ENCODE measurements at regions of chr9 and their contacts with region 1.

Region 1: DNA sequence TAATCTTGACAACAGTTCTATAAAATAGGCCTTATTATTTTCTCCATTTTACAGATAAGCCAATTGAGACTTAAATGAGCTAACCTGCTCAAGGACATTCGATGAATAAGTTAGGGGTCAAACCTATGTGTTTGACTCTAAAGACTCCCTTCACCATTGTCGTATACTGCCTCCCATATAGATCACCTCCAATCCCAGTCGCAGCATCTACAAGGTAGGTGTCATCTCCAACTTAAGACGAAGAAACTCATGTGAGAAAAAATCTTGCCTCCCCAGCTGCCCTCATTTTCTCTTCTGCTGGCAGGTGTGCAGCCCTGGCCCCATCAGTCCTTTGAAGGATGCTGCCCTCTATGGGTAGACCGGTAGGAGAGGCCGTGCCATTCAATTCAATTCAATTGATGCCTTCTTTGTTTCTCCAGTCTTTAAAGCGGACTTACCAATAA is 75.2 kb upstream of the SMARCA2 start:
- DNase-seq: no peak
- H3K4me3 ChIP-seq: no peak overlapping the region
- H3K27ac ChIP-seq: no peak overlapping the region
- H3K4me1 ChIP-seq: no peaks in the 10 kb centered on the region
- H3K27me3 ChIP-seq: no peaks in the 10 kb centered on the region
- CTCF ChIP-seq: peak; percentile 69 to 88 (median 76)
- EP300 ChIP-seq: no peak
- POLR2A ChIP-seq: no peak
- RAD21 ChIP-seq: peak; percentile 69 to 76

Region 2: GRCh38 chr9:1747417-1747967 is 192.5 kb before region 1 on chr9:
- CTCF ChIA-PET with region 1: no interaction called
- POLR2A ChIA-PET with region 1: no interaction called
- DNase-seq: no peak
- H3K4me3 ChIP-seq: no peak overlapping the region
- H3K27ac ChIP-seq: no peak overlapping the region
- H3K4me1 ChIP-seq: no peaks in the 10 kb centered on the region
- H3K27me3 ChIP-seq: no peaks in the 10 kb centered on the region
- CTCF ChIP-seq: no peak
- EP300 ChIP-seq: no peak
- POLR2A ChIP-seq: no peak
- RAD21 ChIP-seq: no peak

Region 3: GRCh38 chr9:1916655-1917054 is 23.3 kb before region 1 on chr9:
- CTCF ChIA-PET with region 1: interaction called, 21 read pairs
- POLR2A ChIA-PET with region 1: no interaction called
- DNase-seq: no peak
- H3K4me3 ChIP-seq: no peak overlapping the region
- H3K27ac ChIP-seq: no peak overlapping the region
- H3K4me1 ChIP-seq: peaks cover 2 to 7% (median 3%) of the 10 kb centered on the region in 4 experiments; a peak in 4 of 7 replicates
- H3K27me3 ChIP-seq: no peaks in the 10 kb centered on the region
- CTCF ChIP-seq: no peak
- EP300 ChIP-seq: no peak
- POLR2A ChIP-seq: no peak
- RAD21 ChIP-seq: no peak

Region 4: DNA sequence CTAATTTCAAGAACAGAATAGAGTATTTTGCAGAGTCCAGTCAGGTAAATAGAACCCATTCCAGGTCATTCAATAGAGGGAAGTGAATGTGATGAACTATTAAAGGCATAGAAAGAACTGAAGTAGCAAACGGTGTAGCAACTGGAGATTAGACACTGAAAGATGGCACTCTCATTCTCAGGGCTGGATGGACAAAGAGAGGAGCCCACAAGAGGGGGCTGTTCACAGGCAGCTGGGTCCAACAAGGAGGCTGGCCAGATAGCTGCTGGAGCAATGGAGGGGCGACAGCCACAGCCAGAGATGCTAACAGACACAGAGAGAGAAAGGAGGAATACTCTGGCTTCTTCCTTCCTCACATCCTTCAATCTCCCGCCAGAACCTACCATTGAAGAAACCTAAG is 17.9 kb before region 1 on chr9:
- CTCF ChIA-PET with region 1: interaction called, 21 read pairs
- POLR2A ChIA-PET with region 1: no interaction called
- DNase-seq: no peak
- H3K4me3 ChIP-seq: no peak overlapping the region
- H3K27ac ChIP-seq: no peak overlapping the region
- H3K4me1 ChIP-seq: peaks cover 2 to 7% (median 3%) of the 10 kb centered on the region in 4 experiments; a peak in 4 of 7 replicates
- H3K27me3 ChIP-seq: no peaks in the 10 kb centered on the region
- CTCF ChIP-seq: peak; percentile 24 to 55 (median 48)
- EP300 ChIP-seq: no peak
- POLR2A ChIP-seq: no peak
- RAD21 ChIP-seq: peak; percentile 55 to 67

Region 5: DNA sequence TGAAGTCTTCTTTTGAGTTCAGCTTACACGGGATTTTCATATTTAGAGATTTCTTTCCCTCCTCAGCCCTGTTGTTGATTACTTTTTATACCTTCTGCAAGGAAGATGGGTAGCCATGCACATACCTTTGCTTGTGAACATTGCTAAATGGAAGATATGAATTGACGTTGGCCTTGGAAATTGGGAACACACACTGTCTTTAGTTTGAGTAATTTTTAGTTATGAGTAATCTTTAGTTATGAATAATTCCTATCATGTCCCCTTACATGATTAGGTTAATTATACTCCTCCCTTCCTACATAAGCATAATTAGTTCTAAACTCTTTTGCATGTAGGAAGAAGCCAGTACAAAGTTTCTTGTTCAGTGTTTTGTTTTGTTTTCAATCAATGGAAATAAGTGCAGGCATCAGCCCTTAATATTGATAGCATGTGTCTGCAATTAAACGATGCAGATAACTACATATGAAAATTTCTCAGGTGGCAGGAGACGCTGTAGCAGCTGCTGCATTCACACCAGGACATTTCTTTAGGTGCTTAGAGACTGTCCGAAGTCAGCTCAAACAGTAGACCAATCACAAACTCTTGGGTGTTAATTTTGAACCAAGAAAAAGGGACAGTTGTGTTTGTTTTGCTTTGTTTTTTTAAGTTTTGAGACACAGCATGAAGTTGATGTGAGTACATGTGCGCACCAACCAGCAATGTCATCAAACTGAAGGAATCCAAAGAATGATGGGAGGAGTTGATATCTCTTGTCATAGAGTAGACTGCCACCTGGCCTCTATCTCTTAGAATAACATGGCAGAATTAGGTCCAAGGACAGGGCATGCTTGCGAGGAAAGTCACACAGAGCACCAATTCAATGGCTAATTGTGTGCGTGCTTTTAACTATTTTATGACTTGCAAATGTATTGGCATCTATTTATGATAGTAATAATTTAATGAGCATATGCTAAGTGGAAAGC is 126.6 kb after region 1 on chr9:
- CTCF ChIA-PET with region 1: interaction called, 26 read pairs
- POLR2A ChIA-PET with region 1: no interaction called
- DNase-seq: no peak
- H3K4me3 ChIP-seq: no peak overlapping the region
- H3K27ac ChIP-seq: no peak overlapping the region
- H3K4me1 ChIP-seq: no peaks in the 10 kb centered on the region
- H3K27me3 ChIP-seq: no peaks in the 10 kb centered on the region
- CTCF ChIP-seq: peak in 2 of 3 experiments; percentile 48 to 54; a peak in 3 of 4 replicates
- EP300 ChIP-seq: no peak
- POLR2A ChIP-seq: no peak
- RAD21 ChIP-seq: peak; percentile 77 to 83

Region 6: DNA sequence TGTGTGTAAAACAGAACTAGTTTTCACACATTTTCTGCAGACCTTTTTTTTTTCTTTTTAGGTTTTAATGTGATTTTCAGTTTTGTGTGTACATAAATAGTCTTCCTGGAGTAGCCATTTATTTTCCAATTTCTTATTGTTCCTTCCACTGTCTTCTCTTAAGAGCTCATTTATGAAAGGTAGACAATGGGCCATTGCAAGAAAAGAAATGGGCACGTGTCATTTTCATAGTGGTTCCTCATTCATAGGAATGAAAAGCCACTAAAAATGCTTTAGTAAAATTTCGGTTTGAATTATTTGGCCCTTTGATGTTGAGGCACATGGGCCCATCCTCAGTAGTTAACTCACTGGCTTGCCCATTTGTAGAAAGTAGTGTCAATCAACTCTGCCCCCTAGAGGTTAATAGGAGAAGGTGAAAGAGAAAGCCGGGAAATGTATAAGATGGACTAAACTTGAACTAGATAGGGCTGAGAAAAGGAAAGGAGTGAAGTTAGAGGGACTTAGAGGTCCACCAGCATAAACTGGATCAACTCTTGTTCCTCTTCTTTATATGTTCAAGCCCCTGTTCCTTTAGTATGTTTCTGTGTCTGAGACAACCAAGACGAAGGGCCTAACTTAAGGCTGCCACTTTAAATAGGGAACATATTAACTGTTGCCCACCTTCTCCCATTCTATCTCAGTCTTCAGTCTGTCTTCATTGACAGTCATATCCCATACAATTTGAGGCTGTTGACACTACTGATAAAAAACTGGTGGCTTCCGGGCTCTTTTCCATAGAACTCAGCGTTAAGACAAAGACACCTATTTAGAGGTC is 147.8 kb after region 1 on chr9:
- CTCF ChIA-PET with region 1: interaction called, 22 read pairs
- POLR2A ChIA-PET with region 1: no interaction called
- DNase-seq: no peak
- H3K4me3 ChIP-seq: no peak overlapping the region
- H3K27ac ChIP-seq: no peak overlapping the region
- H3K4me1 ChIP-seq: no peaks in the 10 kb centered on the region
- H3K27me3 ChIP-seq: no peaks in the 10 kb centered on the region
- CTCF ChIP-seq: peak in 2 of 3 experiments; percentile 57 to 71; a peak in 3 of 4 replicates
- EP300 ChIP-seq: no peak
- POLR2A ChIP-seq: no peak
- RAD21 ChIP-seq: peak; percentile 71 to 80

Region 7: DNA sequence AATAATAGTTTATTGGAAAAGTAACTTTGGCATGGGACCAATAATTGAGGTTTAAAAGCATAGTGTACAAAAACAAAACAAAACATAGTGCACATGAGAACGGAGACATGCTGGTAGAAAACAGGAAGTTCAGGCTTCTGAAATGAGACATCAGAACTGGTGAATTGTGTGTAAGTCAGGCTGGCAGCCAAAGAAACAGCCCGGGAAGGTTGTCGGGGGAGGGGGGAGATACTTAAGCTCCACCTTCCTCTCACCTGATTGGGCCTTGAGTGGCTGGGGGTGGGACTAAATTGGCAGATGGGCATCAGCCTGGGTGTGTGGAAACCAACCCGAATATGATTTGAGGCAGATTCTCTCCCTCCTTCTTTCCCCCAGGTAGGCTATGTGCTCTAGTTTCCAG is 331.5 kb after region 1 on chr9:
- CTCF ChIA-PET with region 1: no interaction called
- POLR2A ChIA-PET with region 1: no interaction called
- DNase-seq: peak in 1 of 2 experiments; percentile 53
- H3K4me3 ChIP-seq: no peak overlapping the region
- H3K27ac ChIP-seq: no peak overlapping the region
- H3K4me1 ChIP-seq: peaks cover 0 to 6% (median 3%) of the 10 kb centered on the region in 4 experiments; a peak in 3 of 7 replicates
- H3K27me3 ChIP-seq: no peaks in the 10 kb centered on the region
- CTCF ChIP-seq: no peak
- EP300 ChIP-seq: no peak
- POLR2A ChIP-seq: no peak
- RAD21 ChIP-seq: no peak